Caco-2 (cell line): ENCODE measurements at regions of chr12 and their contacts with region 1.

Region 1: DNA sequence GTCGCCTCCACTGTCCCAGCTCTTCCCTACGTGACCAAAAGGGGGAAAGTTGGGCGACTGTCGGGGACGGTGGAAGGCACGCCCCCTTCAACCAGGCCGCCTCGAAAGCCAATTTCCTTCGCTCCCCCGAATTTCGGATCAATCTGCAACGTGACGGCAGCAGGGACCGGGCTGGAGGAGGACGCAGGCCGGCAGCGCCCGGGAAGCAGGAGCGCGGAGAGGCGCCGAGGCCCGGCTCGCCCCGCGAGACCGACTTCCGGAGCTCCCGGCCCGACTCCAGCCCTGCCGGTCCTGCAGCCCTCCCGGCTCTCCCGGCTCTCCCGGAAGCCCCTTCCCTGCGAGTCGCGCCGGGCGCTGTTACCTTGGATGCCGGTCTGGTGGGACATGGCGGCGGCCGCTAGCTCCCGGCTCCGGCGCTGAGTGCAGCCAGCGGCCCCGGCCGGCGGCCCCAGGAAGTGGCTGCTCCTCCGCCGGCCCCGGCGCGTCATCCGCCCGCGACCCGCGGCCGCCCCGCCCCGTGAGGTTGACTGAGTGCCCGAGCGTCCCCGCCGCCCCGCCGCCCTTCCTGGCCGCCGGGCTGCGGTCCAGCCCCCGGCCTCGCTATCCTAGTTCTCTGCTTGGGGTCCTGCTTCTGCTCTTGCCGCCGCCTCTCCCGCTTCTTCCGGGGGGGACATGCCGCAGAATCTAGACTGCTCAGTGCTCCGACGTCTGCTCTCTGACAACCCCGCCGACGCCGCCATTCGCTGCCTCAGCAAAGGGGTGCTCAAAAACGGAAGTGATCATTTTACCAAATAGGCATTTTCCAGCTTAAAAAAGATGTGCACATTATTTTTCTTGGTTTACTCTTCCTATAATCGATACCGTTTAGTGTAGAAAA is at the start of gene TWF1:
- DNase-seq: peak; percentile 87 to 97
- H3K4me3 ChIP-seq: peak within 1 kb of the TSS; percentile 93
- H3K4me3 Mint-ChIP-seq: peak within 1 kb of the TSS; percentile 85
- H3K27ac Mint-ChIP-seq: peak within 1 kb of the TSS; percentile 98
- H3K4me1 ChIP-seq: peaks cover 12% of the 10 kb centered on the region; the same call in 1 of the 2 replicates
- H3K4me1 Mint-ChIP-seq: peaks cover 12% of the 10 kb centered on the region
- H3K27me3 ChIP-seq: no peaks in the 10 kb centered on the region
- H3K27me3 Mint-ChIP-seq: no peaks in the 10 kb centered on the region
- CTCF ChIP-seq: peak; percentile 48 to 53
- total RNA-seq, gene TWF1: 125 and 140 TPM in 2 replicates

Region 2: DNA sequence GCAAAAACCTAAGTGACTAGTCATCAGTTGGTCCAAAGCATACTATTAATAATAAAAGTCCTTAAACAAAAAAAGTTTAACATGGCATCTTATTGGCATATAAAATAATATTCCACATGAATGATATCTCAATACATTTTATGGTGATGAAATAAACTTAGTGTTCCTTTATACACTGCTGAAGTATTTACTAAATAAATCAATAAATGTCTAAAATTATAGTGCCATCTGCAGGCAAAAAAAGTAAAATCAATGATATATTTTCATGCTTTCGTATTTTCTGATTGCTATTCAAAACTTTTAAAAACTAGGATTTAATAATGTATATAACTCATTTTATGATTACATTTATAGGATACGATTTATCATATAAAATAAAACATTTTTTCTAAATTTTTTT is 78.0 kb before region 1 on chr12:
- CTCF ChIA-PET with region 1: no interaction called
- POLR2A ChIA-PET with region 1: no interaction called
- intact Hi-C with region 1: no loop called
- DNase-seq: no peak
- H3K4me3 ChIP-seq: no peak overlapping the region
- H3K4me3 Mint-ChIP-seq: no peak overlapping the region
- H3K27ac Mint-ChIP-seq: no peak overlapping the region
- H3K4me1 ChIP-seq: no peaks in the 10 kb centered on the region
- H3K4me1 Mint-ChIP-seq: no peaks in the 10 kb centered on the region
- H3K27me3 ChIP-seq: no peaks in the 10 kb centered on the region
- H3K27me3 Mint-ChIP-seq: no peaks in the 10 kb centered on the region
- CTCF ChIP-seq: peak in 1 of 2 experiments; percentile 45

Region 3: DNA sequence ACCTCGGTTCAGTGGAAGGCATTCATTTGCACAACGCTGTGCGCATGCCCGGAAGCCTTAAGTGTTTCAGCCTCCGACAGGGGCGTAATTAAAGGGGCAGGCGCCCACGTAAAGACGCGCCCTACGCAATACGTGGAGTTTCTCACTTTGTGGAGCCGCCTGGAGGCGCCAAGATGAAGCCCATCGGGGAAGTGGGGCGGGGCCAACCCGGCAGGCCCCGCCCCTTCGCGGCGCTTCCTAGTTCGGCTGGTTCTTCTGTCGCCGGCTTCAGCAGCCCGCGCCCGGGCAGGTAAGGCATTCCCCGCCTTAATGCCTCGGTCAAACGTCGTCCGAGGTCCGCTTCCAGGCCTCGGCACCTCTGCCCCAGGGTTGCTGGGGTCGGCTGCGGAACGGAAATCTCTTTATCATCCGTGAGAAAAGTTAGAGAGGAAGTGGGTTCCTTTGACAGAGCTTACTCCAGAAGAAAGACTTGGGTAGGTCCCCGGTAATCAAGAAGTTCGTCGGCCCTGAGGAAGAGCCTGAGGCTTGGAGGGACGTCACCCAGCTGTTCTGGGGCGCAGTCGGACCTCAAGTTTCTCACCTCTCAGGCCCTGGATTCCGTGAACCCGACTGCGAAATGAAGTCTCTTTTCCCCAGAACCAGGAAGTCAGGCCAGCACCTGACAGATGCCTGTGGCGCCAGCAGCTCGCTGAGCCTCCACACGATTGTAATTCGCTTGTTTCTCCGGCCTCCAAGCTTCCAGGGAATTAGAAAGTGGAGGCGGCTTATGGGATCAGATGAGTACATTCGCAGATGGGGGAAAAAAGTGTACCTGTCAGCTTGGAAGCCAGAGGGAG is 47.2 kb before region 1 on chr12 and contains the starts of genes IRAK4 and PUS7L:
- CTCF ChIA-PET with region 1: no interaction called
- POLR2A ChIA-PET with region 1: interaction called, 4 read pairs
- intact Hi-C with region 1: loop called (anchors 2 kb)
- DNase-seq: peak; percentile 96 to 97
- H3K4me3 ChIP-seq: peak within 1 kb of the TSS; percentile 58
- H3K4me3 Mint-ChIP-seq: peak within 1 kb of the TSS; percentile 85
- H3K27ac Mint-ChIP-seq: peak within 1 kb of the TSS; percentile 95
- H3K4me1 ChIP-seq: no peaks in the 10 kb centered on the region; the same call in 1 of the 2 replicates
- H3K4me1 Mint-ChIP-seq: peaks cover 28% of the 10 kb centered on the region
- H3K27me3 ChIP-seq: no peaks in the 10 kb centered on the region
- H3K27me3 Mint-ChIP-seq: no peaks in the 10 kb centered on the region
- CTCF ChIP-seq: peak; percentile 23 to 57
- total RNA-seq, gene IRAK4: 11.7 and 15.3 TPM in 2 replicates
- total RNA-seq, gene PUS7L: 29.1 and 36.0 TPM in 2 replicates

Region 4: DNA sequence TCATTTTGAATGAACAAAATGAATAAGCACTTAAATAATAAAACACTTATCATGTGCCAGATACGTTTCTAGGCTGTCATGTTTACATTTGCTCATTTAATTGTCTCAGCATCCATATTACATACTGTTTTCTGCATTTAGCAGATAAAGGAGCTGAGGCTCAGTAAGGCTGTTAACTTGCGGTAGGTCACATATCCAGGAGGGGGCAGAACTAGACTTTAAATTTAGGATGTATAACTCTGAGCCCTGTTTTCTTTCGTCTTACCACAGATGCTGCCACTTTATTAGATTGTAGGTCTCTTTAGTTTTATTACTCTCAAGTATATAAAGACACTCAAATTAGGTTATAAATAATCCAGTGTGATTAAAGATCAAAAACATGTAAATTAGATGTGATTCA is 29.6 kb before region 1 on chr12:
- CTCF ChIA-PET with region 1: interaction called, 9 read pairs
- POLR2A ChIA-PET with region 1: interaction called, 4 read pairs
- intact Hi-C with region 1: loop called (anchors 1 kb)
- DNase-seq: peak in 1 of 2 experiments; percentile 59
- H3K4me3 ChIP-seq: no peak overlapping the region
- H3K4me3 Mint-ChIP-seq: no peak overlapping the region
- H3K27ac Mint-ChIP-seq: no peak overlapping the region
- H3K4me1 ChIP-seq: no peaks in the 10 kb centered on the region
- H3K4me1 Mint-ChIP-seq: no peaks in the 10 kb centered on the region
- H3K27me3 ChIP-seq: no peaks in the 10 kb centered on the region
- H3K27me3 Mint-ChIP-seq: no peaks in the 10 kb centered on the region
- CTCF ChIP-seq: peak; percentile 69 to 83

Region 5: DNA sequence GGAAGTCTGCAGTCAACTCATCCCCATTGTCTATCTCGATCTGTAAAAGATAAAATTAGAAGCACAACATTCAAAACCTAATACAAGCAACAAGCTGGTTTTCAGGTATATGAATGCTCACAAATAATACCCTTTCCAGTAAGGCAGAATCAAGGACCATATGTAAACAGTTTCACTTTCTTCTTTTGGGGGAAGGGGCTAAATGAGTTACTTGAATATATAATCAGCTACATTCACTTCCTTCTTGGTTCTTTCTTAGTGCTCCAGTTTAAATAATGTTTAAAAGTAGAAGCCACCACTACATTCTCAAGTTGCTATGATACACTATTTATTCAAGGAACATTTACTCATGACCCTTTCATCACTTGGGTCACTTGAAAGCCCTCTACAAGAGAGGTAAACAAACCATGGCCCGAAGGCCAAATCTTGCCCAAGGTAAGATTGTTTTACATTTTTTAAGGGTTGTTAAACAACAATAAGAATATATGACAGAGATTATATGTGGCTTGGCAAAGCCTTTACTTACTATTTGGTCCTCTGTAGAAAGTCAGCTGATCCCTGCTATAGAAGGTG is 10.3 kb before region 1 on chr12:
- CTCF ChIA-PET with region 1: interaction called, 3 read pairs
- POLR2A ChIA-PET with region 1: interaction called, 9 read pairs
- intact Hi-C with region 1: loop called (anchors 1 kb)
- DNase-seq: peak; percentile 46 to 72
- H3K4me3 ChIP-seq: no peak overlapping the region
- H3K4me3 Mint-ChIP-seq: no peak overlapping the region
- H3K27ac Mint-ChIP-seq: peak overlapping the region; percentile 70
- H3K4me1 ChIP-seq: peaks cover 19% of the 10 kb centered on the region
- H3K4me1 Mint-ChIP-seq: peaks cover 26% of the 10 kb centered on the region
- H3K27me3 ChIP-seq: no peaks in the 10 kb centered on the region
- H3K27me3 Mint-ChIP-seq: no peaks in the 10 kb centered on the region
- CTCF ChIP-seq: no peak

Region 6: GRCh38 chr12:43835656-43836474 is 29.8 kb after region 1 on chr12 and contains the start of gene TMEM117:
- CTCF ChIA-PET with region 1: interaction called, 4 read pairs
- POLR2A ChIA-PET with region 1: interaction called, 18 read pairs
- intact Hi-C with region 1: loop called (anchors 1 kb)
- DNase-seq: peak; percentile 75 to 80
- H3K4me3 ChIP-seq: peak within 1 kb of the TSS; percentile 59
- H3K4me3 Mint-ChIP-seq: peak within 1 kb of the TSS; percentile 81
- H3K27ac Mint-ChIP-seq: peak within 1 kb of the TSS; percentile 87
- H3K4me1 ChIP-seq: peaks cover 28% of the 10 kb centered on the region
- H3K4me1 Mint-ChIP-seq: peaks cover 31% of the 10 kb centered on the region
- H3K27me3 ChIP-seq: no peaks in the 10 kb centered on the region
- H3K27me3 Mint-ChIP-seq: no peaks in the 10 kb centered on the region
- CTCF ChIP-seq: no peak
- total RNA-seq, gene TMEM117: 28.0 and 34.1 TPM in 2 replicates

Region 7: GRCh38 chr12:43848786-43849185 is 42.7 kb after region 1 on chr12:
- CTCF ChIA-PET with region 1: interaction called, 4 read pairs
- POLR2A ChIA-PET with region 1: interaction called, 6 read pairs
- intact Hi-C with region 1: loop called (anchors 1 kb)
- DNase-seq: peak; percentile 47 to 48
- H3K4me3 ChIP-seq: no peak overlapping the region
- H3K4me3 Mint-ChIP-seq: peak overlapping the region; percentile 56
- H3K27ac Mint-ChIP-seq: peak overlapping the region; percentile 85
- H3K4me1 ChIP-seq: peaks cover 64% of the 10 kb centered on the region
- H3K4me1 Mint-ChIP-seq: peaks cover 51% of the 10 kb centered on the region
- H3K27me3 ChIP-seq: no peaks in the 10 kb centered on the region
- H3K27me3 Mint-ChIP-seq: no peaks in the 10 kb centered on the region
- CTCF ChIP-seq: no peak